Lower leg skin (tissue), 4 donors: ENCODE measurements at regions of chr3 and their contacts with region 1.

Region 1: GRCh38 chr3:68764554-68764953 is 167.8 kb downstream of the TAFA4 start:
- DNase-seq: no peak
- H3K4me3 ChIP-seq: no peak overlapping the region
- CTCF ChIP-seq: no peak
- POLR2A ChIP-seq: no peak

Region 2: DNA sequence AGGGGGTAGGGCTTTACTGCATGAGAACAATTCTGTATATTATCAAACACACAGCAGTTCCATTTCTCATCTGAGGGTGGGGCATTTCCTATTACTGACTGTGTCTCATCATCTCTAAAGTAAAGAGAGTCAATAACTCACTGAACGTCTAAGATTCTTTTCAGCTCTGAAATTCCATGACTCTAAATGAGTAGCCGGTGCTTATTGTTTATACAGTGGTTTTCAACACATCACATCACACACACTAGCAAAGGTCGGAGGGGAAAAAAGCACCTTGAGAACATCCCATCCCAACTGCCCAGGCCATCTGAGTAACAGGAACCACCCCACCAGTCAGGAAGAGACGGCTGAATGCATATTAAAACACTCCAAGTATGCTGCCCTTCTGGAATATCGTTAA is 1306.1 kb before region 1 on chr3:
- intact Hi-C with region 1: loop called (anchors 10 kb)
- DNase-seq: no peak
- H3K4me3 ChIP-seq: no peak overlapping the region
- CTCF ChIP-seq: no peak
- POLR2A ChIP-seq: no peak

Region 3: DNA sequence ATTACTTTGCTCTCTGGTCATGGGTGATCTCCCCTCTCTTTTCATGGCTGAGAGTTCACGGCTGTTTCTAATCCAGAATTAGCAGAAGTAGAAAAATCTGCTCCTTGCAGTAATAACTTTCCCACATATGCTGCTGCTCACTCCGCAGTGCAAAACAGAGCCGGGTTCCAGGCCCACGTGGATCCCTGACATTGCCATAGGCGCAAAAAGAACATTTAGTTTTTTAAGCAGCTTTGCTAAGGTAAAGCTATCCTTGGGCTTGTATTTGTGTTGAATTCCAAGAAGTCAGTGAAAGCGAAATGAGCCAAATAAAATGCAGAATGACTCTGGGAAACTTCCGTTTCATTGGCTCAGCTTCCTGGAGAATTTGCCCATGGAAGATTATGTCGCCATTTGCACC is 476.5 kb before region 1 on chr3:
- intact Hi-C with region 1: no loop called
- DNase-seq: no peak
- H3K4me3 ChIP-seq: no peak overlapping the region
- CTCF ChIP-seq: no peak
- POLR2A ChIP-seq: no peak

Region 4: GRCh38 chr3:68535782-68536181 is 228.8 kb before region 1 on chr3:
- intact Hi-C with region 1: no loop called
- DNase-seq: no peak
- H3K4me3 ChIP-seq: no peak overlapping the region
- CTCF ChIP-seq: no peak
- POLR2A ChIP-seq: no peak